ENCODE measurements at regions of chr7 and their contacts with region 1.

Region 1: DNA sequence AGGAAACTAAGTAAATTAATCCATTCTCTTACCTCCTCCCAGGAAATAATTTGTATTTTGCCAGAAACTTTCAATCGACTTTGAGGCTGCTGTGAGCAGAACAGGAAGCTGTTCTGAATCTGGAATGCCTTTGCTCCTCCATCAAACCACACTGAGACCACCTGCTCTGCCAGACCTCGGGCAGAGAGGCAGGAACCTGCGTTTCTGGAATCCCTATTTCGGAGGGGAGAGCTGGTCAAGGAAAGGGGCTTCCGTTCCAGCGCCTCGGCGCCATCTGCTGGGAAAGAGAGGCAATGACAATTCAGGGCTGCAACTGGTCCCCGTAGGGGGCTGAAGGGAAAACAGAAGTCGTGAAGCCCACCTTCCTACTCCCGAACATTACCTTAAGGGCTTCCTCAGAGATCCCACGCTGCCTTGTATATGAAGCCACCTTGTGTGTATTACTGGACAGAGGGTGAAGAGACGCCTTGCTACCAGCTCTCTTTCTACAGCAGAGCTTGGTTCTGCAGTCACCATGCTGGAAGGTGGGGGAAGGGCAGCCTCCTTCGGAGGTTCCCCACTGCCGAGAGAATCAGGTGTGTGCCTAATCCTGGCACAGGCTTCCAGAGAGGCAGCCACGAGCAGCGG is 31.2 kb downstream of the ZNF467 start:
- DNase-seq: peak; percentile 92
- H3K4me3 ChIP-seq: peak overlapping the region; percentile 45 to 56
- H3K27ac ChIP-seq: peak overlapping the region in 1 of 2 experiments; percentile 17; a peak in 2 of 4 replicates
- H3K4me1 ChIP-seq: peaks cover 0 to 11% of the 10 kb centered on the region in 2 experiments; a peak in 1 of 4 replicates
- H3K27me3 ChIP-seq: peaks cover 30% of the 10 kb centered on the region
- CTCF ChIP-seq: peak; percentile 98
- EP300 ChIP-seq: no peak
- RAD21 ChIP-seq: peak; percentile 90

Region 2: GRCh38 chr7:149496642-149497391 is 245.4 kb before region 1 on chr7:
- CTCF ChIA-PET with region 1: interaction called, 13 read pairs
- POLR2A ChIA-PET with region 1: no interaction called
- DNase-seq: peak; percentile 79
- H3K4me3 ChIP-seq: peak overlapping the region; percentile 93 to 97
- H3K27ac ChIP-seq: peak overlapping the region; percentile 56 to 71
- H3K4me1 ChIP-seq: peaks cover 10 to 12% of the 10 kb centered on the region in 2 experiments
- H3K27me3 ChIP-seq: no peaks in the 10 kb centered on the region
- CTCF ChIP-seq: no peak
- EP300 ChIP-seq: no peak
- RAD21 ChIP-seq: no peak

Region 3: DNA sequence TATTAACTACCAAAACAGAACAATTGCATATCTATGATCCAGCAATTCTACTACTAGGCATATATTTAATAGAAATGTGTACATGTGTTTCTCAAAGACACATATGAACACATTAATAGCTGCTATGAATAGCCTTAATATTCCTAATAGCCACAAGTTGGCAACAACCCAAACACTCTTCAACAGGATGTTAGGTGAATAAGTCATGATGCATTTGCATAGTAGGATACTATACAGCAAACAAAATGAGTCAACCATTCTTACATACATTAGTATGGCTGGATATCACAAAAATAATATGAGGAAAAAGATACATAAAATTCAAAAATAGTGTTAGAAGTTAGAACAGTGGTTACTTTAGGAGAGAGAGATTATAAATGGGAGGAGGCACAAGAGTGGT is 217.8 kb before region 1 on chr7:
- CTCF ChIA-PET with region 1: no interaction called
- POLR2A ChIA-PET with region 1: no interaction called
- DNase-seq: no peak
- H3K4me3 ChIP-seq: no peak overlapping the region
- H3K27ac ChIP-seq: no peak overlapping the region
- H3K4me1 ChIP-seq: no peaks in the 10 kb centered on the region
- H3K27me3 ChIP-seq: no peaks in the 10 kb centered on the region
- CTCF ChIP-seq: no peak
- EP300 ChIP-seq: no peak
- RAD21 ChIP-seq: no peak

Region 4: GRCh38 chr7:149662591-149663095 is 79.5 kb before region 1 on chr7:
- CTCF ChIA-PET with region 1: interaction called, 40 read pairs
- POLR2A ChIA-PET with region 1: no interaction called
- DNase-seq: peak; percentile 44
- H3K4me3 ChIP-seq: no peak overlapping the region
- H3K27ac ChIP-seq: no peak overlapping the region
- H3K4me1 ChIP-seq: no peaks in the 10 kb centered on the region; a peak in 1 of 4 replicates
- H3K27me3 ChIP-seq: no peaks in the 10 kb centered on the region
- CTCF ChIP-seq: peak; percentile 55
- EP300 ChIP-seq: no peak
- RAD21 ChIP-seq: peak; percentile 67

Region 5: GRCh38 chr7:149714050-149714909 is 27.9 kb before region 1 on chr7:
- CTCF ChIA-PET with region 1: interaction called, 15 read pairs
- POLR2A ChIA-PET with region 1: interaction called, 3 read pairs
- DNase-seq: peak; percentile 100
- H3K4me3 ChIP-seq: peak overlapping the region; percentile 60 to 63
- H3K27ac ChIP-seq: peak overlapping the region in 1 of 2 experiments; percentile 47; a peak in 1 of 4 replicates
- H3K4me1 ChIP-seq: peaks cover 5 to 28% of the 10 kb centered on the region in 2 experiments; a peak in 1 of 4 replicates
- H3K27me3 ChIP-seq: no peaks in the 10 kb centered on the region
- CTCF ChIP-seq: no peak
- EP300 ChIP-seq: no peak
- RAD21 ChIP-seq: no peak

Region 6: GRCh38 chr7:149753401-149754233 is 11.4 kb after region 1 on chr7:
- CTCF ChIA-PET with region 1: interaction called, 37 read pairs
- POLR2A ChIA-PET with region 1: no interaction called
- DNase-seq: peak; percentile 71
- H3K4me3 ChIP-seq: peak overlapping the region in 1 of 2 experiments; percentile 45; a peak in 1 of 4 replicates
- H3K27ac ChIP-seq: no peak overlapping the region
- H3K4me1 ChIP-seq: no peaks in the 10 kb centered on the region
- H3K27me3 ChIP-seq: peaks cover under 1% of the 10 kb centered on the region; the same call in 1 of the 2 replicates
- CTCF ChIP-seq: peak; percentile 80
- EP300 ChIP-seq: no peak
- RAD21 ChIP-seq: peak; percentile 73

Region 7: DNA sequence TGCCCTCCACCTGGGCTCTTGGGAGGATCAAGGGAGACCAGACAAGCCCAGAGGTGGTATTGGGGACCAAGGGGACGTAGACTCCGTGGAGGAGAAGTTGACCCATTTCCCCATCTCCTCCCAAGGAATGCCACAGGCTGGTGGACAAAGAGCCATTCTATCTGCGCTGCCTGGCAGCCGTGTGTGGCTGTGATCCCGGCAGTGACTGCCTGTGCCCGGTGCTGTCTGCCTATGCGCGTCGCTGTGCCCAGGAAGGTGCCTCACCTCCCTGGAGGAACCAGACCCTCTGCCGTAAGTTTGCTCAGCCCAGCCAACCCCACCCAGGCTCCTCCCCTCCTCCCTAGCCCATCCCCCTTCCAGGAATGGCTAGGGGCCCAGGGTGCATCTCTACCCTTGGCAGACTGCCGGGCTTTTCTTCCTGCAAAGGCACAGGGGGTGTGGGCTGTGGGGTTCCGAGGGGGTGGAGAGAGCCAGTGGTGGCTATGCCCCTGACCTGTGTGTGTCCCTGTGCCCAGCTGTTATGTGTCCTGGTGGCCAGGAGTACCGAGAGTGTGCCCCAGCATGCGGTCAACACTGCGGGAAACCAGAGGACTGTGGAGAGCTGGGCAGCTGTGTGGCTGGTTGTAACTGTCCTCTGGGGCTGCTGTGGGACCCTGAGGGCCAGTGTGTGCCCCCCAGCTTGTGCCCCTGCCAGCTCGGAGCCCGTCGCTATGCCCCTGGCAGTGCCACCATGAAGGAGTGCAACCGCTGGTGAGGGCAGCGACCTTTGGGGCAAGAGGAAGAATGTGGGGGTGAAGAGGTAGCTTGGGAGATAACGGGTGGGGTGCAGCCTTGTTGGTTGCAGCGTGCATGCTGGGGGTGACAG is 41.4 kb after region 1 on chr7:
- CTCF ChIA-PET with region 1: interaction called, 13 read pairs
- POLR2A ChIA-PET with region 1: no interaction called
- DNase-seq: no peak
- H3K4me3 ChIP-seq: no peak overlapping the region
- H3K27ac ChIP-seq: no peak overlapping the region
- H3K4me1 ChIP-seq: peaks cover 0 to 35% of the 10 kb centered on the region in 2 experiments; a peak in 1 of 4 replicates
- H3K27me3 ChIP-seq: peaks cover 11% of the 10 kb centered on the region; the same call in 1 of the 2 replicates
- CTCF ChIP-seq: no peak
- EP300 ChIP-seq: no peak
- RAD21 ChIP-seq: no peak